Aorta (tissue), 5 donors: ENCODE measurements at regions of chr3 and their contacts with region 1.

Region 1: DNA sequence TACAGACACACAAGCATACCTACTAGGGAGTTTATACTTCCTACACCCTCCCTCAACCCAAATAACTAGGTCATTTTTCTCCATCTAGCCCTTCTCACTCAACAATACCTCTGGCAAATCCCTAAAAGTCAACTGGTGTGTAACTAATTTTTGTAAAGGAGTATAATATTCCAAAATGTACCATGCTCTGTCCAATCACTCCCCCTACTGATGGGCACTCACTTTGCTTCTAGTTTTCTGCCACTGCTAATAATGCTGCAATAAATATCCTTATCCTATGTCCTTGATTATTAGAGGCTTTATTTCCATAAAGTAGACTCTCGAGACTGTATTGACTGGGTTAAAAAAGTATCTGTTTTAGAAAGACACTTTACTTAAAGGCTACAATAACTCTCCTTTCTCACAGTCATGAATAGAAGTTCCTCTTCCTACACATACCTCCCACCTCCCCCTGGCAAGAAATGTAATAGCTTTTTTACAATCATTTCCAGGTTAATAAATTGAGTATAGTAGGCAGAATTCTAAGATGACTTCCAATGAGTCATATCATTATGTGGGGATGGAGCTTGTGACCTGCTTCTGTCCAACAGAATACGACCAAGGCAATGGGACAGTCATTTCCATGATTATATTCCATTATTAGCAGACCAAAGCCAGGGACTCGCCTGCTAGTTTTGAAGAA is 30.0 kb downstream of the SHQ1 start:
- DNase-seq: no peak
- ATAC-seq: no peak
- H3K4me3 ChIP-seq: no peak overlapping the region
- H3K27ac ChIP-seq: no peak overlapping the region
- H3K4me1 ChIP-seq: peaks cover 2% of the 10 kb centered on the region in 2 donors
- H3K27me3 ChIP-seq: no peaks in the 10 kb centered on the region

Region 2: GRCh38 chr3:71734883-71735282 is 1083.3 kb before region 1 on chr3:
- intact Hi-C with region 1: loop called in 1 of 2 experiments (anchors 5 kb)
- DNase-seq: no peak
- ATAC-seq: no peak
- H3K4me3 ChIP-seq: no peak overlapping the region
- H3K27ac ChIP-seq: no peak overlapping the region
- H3K4me1 ChIP-seq: no peaks in the 10 kb centered on the region
- H3K27me3 ChIP-seq: no peaks in the 10 kb centered on the region

Region 3: GRCh38 chr3:71875461-71875947 is 942.7 kb before region 1 on chr3:
- intact Hi-C with region 1: loop called (anchors 2 to 5 kb)
- DNase-seq: peak; percentile 75 to 89
- ATAC-seq: peak; percentile 91
- H3K4me3 ChIP-seq: no peak overlapping the region
- H3K27ac ChIP-seq: no peak overlapping the region
- H3K4me1 ChIP-seq: no peaks in the 10 kb centered on the region
- H3K27me3 ChIP-seq: no peaks in the 10 kb centered on the region

Region 4: GRCh38 chr3:71955240-71956068 is 862.8 kb before region 1 on chr3:
- intact Hi-C with region 1: loop called (anchors 2 kb)
- DNase-seq: peak; percentile 82 to 87
- ATAC-seq: peak; percentile 87
- H3K4me3 ChIP-seq: no peak overlapping the region
- H3K27ac ChIP-seq: no peak overlapping the region
- H3K4me1 ChIP-seq: no peaks in the 10 kb centered on the region
- H3K27me3 ChIP-seq: no peaks in the 10 kb centered on the region

Region 5: DNA sequence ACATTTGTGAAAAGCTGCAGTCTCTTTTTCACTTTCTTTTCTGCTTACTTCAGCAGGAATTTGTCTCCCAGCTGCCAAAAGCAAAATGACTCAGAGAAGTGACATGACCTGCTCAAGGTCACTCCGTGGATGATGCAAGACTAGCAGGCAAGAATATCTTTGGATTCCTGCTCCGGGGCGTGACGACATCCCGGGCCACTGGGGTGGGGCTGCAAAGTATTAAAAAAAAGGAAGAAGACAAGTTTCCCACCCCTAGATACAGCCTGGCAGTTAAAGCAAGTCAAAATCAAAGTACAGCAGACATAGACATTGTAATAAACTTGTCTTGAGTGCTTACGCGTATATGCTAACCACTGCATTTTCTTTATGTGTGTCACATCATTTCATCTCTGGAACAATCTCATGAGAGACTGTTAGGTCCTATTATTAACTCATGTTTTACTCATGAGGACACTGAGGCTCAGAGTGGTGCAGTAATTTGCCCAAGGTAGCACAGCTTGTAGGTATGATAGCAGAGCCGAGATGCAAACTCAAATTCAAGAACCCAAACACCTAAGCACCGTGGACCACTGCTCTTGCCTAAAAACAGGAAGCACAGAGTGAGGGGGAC is 548.1 kb before region 1 on chr3:
- intact Hi-C with region 1: loop called in 1 of 2 experiments (anchors 10 kb)
- DNase-seq: peak; percentile 92 to 94
- ATAC-seq: peak; percentile 93
- H3K4me3 ChIP-seq: no peak overlapping the region
- H3K27ac ChIP-seq: no peak overlapping the region
- H3K4me1 ChIP-seq: no peaks in the 10 kb centered on the region
- H3K27me3 ChIP-seq: no peaks in the 10 kb centered on the region

Region 6: GRCh38 chr3:72661115-72661457 is 157.1 kb before region 1 on chr3:
- intact Hi-C with region 1: loop called in 1 of 2 experiments (anchors 5 kb)
- DNase-seq: peak; percentile 81 to 86
- ATAC-seq: peak; percentile 73
- H3K4me3 ChIP-seq: no peak overlapping the region
- H3K27ac ChIP-seq: no peak overlapping the region
- H3K4me1 ChIP-seq: peaks cover 0 to 2% of the 10 kb centered on the region in 2 donors
- H3K27me3 ChIP-seq: no peaks in the 10 kb centered on the region

Region 7: GRCh38 chr3:72872183-72872582 is 54.0 kb after region 1 on chr3:
- intact Hi-C with region 1: no loop called
- DNase-seq: no peak
- ATAC-seq: no peak
- H3K4me3 ChIP-seq: no peak overlapping the region
- H3K27ac ChIP-seq: no peak overlapping the region
- H3K4me1 ChIP-seq: no peaks in the 10 kb centered on the region
- H3K27me3 ChIP-seq: no peaks in the 10 kb centered on the region